Right lobe of liver (tissue), 6 donors: ENCODE measurements at regions of chr3 and their contacts with region 1.

Region 1: GRCh38 chr3:128426128-128426921 is 40.4 kb downstream of the DNAJB8 start:
- DNase-seq: peak; percentile 57 to 67 (median 61)
- ATAC-seq: peak; percentile 92 to 97 (median 95)
- H3K4me3 ChIP-seq: peak overlapping the region in 2 of 3 donors; percentile 10 to 42
- H3K27ac ChIP-seq: no peak overlapping the region
- H3K4me1 ChIP-seq: peaks cover 0 to 8% (median 0%) of the 10 kb centered on the region in 4 donors
- H3K27me3 ChIP-seq: no peaks in the 10 kb centered on the region
- CTCF ChIP-seq: peak; percentile 81 to 98 (median 90)
- POLR2A ChIP-seq: no peak

Region 2: GRCh38 chr3:128584412-128585020 is 158.2 kb after region 1 on chr3:
- intact Hi-C with region 1: loop called (anchors 5 to 10 kb)
- DNase-seq: peak; percentile 72 to 85 (median 82)
- ATAC-seq: peak; percentile 98 to 100 (median 99)
- H3K4me3 ChIP-seq: no peak overlapping the region
- H3K27ac ChIP-seq: no peak overlapping the region
- H3K4me1 ChIP-seq: no peaks in the 10 kb centered on the region
- H3K27me3 ChIP-seq: no peaks in the 10 kb centered on the region
- CTCF ChIP-seq: peak; percentile 58 to 75 (median 64)
- POLR2A ChIP-seq: no peak